Heart left ventricle (tissue), 16 donors: ENCODE measurements at regions of chrX and their contacts with region 1.

Region 1: GRCh38 chrX:20530406-20530921 is 263.8 kb upstream of the RPS6KA3 start:
- DNase-seq: peak in 3 of 5 donors; percentile 31 to 37 (median 33)
- ATAC-seq: peak in 2 of 4 donors; percentile 33 to 71
- H3K4me3 ChIP-seq: peak overlapping the region in 7 of 12 donors; percentile 10 to 43 (median 24)
- H3K27ac ChIP-seq: peak overlapping the region in 3 of 12 donors; percentile 7 to 34 (median 29)
- H3K4me1 ChIP-seq: peaks cover 0 to 4% (median 0%) of the 10 kb centered on the region in 12 donors
- H3K27me3 ChIP-seq: peaks cover 0 to 55% (median 0%) of the 10 kb centered on the region in 9 donors
- CTCF ChIP-seq: peak; percentile 44 to 81 (median 63)
- POLR2A ChIP-seq: no peak

Region 2: GRCh38 chrX:21479695-21480270 is 949.3 kb after region 1 on chrX:
- intact Hi-C with region 1: loop called in 9 of 10 experiments (anchors 2 to 5 kb)
- DNase-seq: no peak
- ATAC-seq: peak in 2 of 4 donors; percentile 57
- H3K4me3 ChIP-seq: no peak overlapping the region
- H3K27ac ChIP-seq: no peak overlapping the region
- H3K4me1 ChIP-seq: no peaks in the 10 kb centered on the region
- H3K27me3 ChIP-seq: no peaks in the 10 kb centered on the region
- CTCF ChIP-seq: peak; percentile 28 to 62 (median 50)
- POLR2A ChIP-seq: no peak

Region 3: GRCh38 chrX:21725496-21725895 is 1195.0 kb after region 1 on chrX:
- intact Hi-C with region 1: loop called in 1 of 10 experiments (anchors 10 kb)
- DNase-seq: no peak
- ATAC-seq: no peak
- H3K4me3 ChIP-seq: no peak overlapping the region
- H3K27ac ChIP-seq: peak overlapping the region in 1 of 12 donors; percentile 34
- H3K4me1 ChIP-seq: peaks cover 0 to 33% (median 0%) of the 10 kb centered on the region in 12 donors
- H3K27me3 ChIP-seq: peaks cover 0 to 11% (median 0%) of the 10 kb centered on the region in 9 donors
- CTCF ChIP-seq: peak in 3 of 12 donors; percentile 13 to 31 (median 17)
- POLR2A ChIP-seq: no peak

Region 4: GRCh38 chrX:21738210-21738949 is 1207.9 kb after region 1 on chrX:
- intact Hi-C with region 1: loop called in 4 of 10 experiments (anchors 5 to 10 kb)
- DNase-seq: no peak
- ATAC-seq: peak in 2 of 4 donors; percentile 32 to 44
- H3K4me3 ChIP-seq: no peak overlapping the region
- H3K27ac ChIP-seq: no peak overlapping the region
- H3K4me1 ChIP-seq: peaks cover 0 to 36% (median 0%) of the 10 kb centered on the region in 12 donors
- H3K27me3 ChIP-seq: peaks cover 0 to 24% (median 0%) of the 10 kb centered on the region in 9 donors
- CTCF ChIP-seq: no peak
- POLR2A ChIP-seq: no peak

Region 5: DNA sequence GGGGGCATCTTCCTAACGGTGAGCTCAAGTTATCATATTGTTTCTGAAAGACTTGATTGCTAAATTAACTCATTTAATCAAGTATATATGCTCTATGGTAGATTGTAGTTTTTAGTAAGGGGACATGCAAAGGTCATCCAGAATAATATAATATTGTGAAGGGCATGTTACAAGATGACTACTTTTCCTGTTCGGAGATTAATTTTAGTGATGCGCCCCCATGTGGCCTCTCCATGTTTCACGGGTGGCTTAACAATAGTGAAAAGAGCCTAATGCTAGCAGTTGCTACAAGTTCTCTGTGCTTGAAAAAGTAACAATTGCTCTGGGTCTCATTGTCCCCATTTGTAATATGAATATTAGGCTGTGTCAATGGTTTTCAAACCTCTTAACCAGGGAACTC is 1215.3 kb after region 1 on chrX:
- intact Hi-C with region 1: loop called in 8 of 10 experiments (anchors 5 to 10 kb)
- DNase-seq: peak in 1 of 5 donors; percentile 26
- ATAC-seq: no peak
- H3K4me3 ChIP-seq: no peak overlapping the region
- H3K27ac ChIP-seq: peak overlapping the region in 1 of 12 donors; percentile 19
- H3K4me1 ChIP-seq: peaks cover 0 to 53% (median 1%) of the 10 kb centered on the region in 12 donors
- H3K27me3 ChIP-seq: peaks cover 0 to 11% (median 0%) of the 10 kb centered on the region in 9 donors
- CTCF ChIP-seq: peak; percentile 24 to 57 (median 45)
- POLR2A ChIP-seq: no peak

Region 6: DNA sequence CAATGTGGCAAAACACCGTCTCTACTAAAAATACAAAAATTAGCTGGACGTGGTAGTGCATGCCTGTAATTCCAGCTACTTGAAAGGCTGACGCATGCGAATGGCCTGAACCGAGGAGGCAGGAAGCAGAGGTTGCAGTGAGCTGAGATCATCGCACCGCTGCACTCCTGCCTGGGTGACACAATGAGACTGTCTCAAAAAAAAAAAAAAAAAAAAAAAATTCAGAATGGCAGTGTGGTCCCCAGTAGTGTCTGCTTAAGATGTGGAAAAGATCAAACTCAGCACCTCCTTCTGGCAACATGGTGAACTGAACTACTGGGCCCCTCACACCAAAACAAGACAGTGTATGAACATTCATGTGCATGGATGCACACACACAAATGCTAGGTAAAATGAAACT is 1442.3 kb after region 1 on chrX:
- intact Hi-C with region 1: loop called in 2 of 10 experiments (anchors 5 to 10 kb)
- DNase-seq: peak in 1 of 5 donors; percentile 55
- ATAC-seq: peak; percentile 66 to 88 (median 78)
- H3K4me3 ChIP-seq: no peak overlapping the region
- H3K27ac ChIP-seq: peak overlapping the region in 1 of 12 donors; percentile 34
- H3K4me1 ChIP-seq: peaks cover 0 to 13% (median 0%) of the 10 kb centered on the region in 12 donors
- H3K27me3 ChIP-seq: no peaks in the 10 kb centered on the region
- CTCF ChIP-seq: no peak
- POLR2A ChIP-seq: no peak